ENCODE measurements at regions of chr17 and their contacts with region 1.

Region 1: GRCh38 chr17:1783834-1784611 is 22.2 kb downstream of the SERPINF1 start:
- DNase-seq: no peak
- ATAC-seq: peak; percentile 90
- H3K4me3 Mint-ChIP-seq: peak overlapping the region; percentile 44
- H3K27ac Mint-ChIP-seq: peak overlapping the region; percentile 84
- H3K4me1 Mint-ChIP-seq: peaks cover 33% of the 10 kb centered on the region
- H3K27me3 Mint-ChIP-seq: no peaks in the 10 kb centered on the region
- CTCF ChIP-seq: no peak

Region 2: DNA sequence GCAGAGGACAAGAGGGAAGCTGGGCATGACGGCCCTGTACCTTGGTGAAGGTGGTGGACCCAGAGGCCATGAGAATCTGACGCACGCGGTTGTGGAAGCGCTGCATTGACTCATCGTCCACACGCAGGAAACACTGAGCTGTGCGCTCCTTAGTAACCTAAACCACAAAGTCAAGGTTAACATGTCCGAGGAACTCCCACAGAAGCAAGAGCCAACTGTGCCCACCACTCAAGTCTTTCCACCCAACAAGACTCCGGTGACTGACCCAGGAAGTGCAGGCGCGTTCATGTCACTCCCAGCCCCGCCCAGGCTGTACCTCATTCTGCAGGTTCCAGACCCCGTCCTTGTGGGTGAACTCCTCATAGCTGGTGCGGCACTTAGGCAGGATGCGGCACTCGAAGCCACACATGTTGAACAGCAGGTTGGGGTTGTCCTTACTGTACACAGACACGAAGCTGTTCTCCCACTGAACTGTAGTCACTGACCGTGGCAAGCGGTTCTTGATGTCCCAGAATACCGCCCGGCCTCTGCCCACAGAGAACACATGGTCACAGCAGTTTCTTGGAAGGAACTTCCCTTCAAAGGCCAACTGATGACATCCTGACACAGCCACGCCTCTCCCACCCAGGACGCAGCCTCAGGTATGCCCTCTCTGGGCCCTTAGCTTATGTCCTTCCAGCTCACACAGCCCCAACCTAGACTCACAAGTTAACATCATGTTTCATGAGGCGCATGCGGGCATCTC is 110.8 kb before region 1 on chr17:
- CTCF ChIA-PET with region 1: interaction called, 36 read pairs
- POLR2A ChIA-PET with region 1: interaction called, 5 read pairs
- intact Hi-C with region 1: loop called (anchors 1 kb)
- DNase-seq: no peak
- ATAC-seq: no peak
- H3K4me3 Mint-ChIP-seq: no peak overlapping the region
- H3K27ac Mint-ChIP-seq: no peak overlapping the region
- H3K4me1 Mint-ChIP-seq: no peaks in the 10 kb centered on the region
- H3K27me3 Mint-ChIP-seq: no peaks in the 10 kb centered on the region
- CTCF ChIP-seq: no peak

Region 3: DNA sequence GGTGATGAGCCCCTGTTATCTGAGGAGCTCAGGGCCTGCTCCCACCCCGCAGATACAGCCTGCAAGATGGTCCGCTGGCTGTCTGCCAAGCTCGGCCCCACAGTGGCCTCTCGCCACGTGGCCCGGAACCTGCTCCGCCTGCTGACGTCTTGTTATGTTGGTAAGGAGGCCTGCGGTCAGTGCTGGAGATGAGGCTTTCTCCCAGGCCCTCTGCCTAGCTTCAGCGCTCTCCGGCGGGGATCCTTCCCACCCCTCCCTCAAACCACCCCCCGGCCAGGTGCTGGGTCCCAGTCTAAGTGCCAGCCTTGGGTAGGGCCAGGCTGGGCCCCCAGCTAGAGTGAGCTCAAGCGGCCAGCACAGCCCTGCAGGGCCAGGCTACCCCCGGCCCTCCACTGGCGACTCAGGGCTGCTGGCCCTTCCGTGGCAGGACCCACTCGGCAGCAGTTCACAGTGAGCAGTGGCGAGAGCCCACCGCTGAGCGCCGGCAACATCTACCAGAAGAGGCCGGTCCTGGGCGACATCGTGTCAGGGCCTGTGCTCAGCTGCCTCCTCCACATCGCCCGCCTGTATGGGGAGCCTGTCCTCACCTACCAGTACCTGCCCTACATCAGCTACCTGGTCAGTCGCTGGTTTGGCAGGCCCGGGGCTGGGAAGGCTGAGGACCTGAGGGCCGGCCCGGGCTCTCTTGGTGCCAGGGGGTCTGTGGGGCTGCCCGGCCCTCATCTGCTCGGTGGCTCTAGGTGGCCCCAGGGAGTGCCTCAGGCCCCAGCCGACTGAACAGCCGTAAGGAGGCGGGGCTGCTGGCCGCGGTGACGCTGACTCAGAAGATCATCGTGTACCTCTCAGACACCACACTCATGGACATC is 53.5 kb before region 1 on chr17:
- CTCF ChIA-PET with region 1: interaction called, 24 read pairs
- POLR2A ChIA-PET with region 1: interaction called, 113 read pairs
- intact Hi-C with region 1: no loop called
- DNase-seq: no peak
- ATAC-seq: no peak
- H3K4me3 Mint-ChIP-seq: no peak overlapping the region
- H3K27ac Mint-ChIP-seq: peak overlapping the region; percentile 24
- H3K4me1 Mint-ChIP-seq: peaks cover 56% of the 10 kb centered on the region
- H3K27me3 Mint-ChIP-seq: no peaks in the 10 kb centered on the region
- CTCF ChIP-seq: no peak

Region 4: GRCh38 chr17:1764284-1764683 is 19.7 kb before region 1 on chr17:
- CTCF ChIA-PET with region 1: interaction called, 19 read pairs
- POLR2A ChIA-PET with region 1: interaction called, 67 read pairs
- intact Hi-C with region 1: loop called (anchors 1 kb)
- DNase-seq: peak; percentile 41
- ATAC-seq: peak; percentile 85
- H3K4me3 Mint-ChIP-seq: peak overlapping the region; percentile 53
- H3K27ac Mint-ChIP-seq: peak overlapping the region; percentile 72
- H3K4me1 Mint-ChIP-seq: peaks cover 46% of the 10 kb centered on the region
- H3K27me3 Mint-ChIP-seq: no peaks in the 10 kb centered on the region
- CTCF ChIP-seq: no peak

Region 5: DNA sequence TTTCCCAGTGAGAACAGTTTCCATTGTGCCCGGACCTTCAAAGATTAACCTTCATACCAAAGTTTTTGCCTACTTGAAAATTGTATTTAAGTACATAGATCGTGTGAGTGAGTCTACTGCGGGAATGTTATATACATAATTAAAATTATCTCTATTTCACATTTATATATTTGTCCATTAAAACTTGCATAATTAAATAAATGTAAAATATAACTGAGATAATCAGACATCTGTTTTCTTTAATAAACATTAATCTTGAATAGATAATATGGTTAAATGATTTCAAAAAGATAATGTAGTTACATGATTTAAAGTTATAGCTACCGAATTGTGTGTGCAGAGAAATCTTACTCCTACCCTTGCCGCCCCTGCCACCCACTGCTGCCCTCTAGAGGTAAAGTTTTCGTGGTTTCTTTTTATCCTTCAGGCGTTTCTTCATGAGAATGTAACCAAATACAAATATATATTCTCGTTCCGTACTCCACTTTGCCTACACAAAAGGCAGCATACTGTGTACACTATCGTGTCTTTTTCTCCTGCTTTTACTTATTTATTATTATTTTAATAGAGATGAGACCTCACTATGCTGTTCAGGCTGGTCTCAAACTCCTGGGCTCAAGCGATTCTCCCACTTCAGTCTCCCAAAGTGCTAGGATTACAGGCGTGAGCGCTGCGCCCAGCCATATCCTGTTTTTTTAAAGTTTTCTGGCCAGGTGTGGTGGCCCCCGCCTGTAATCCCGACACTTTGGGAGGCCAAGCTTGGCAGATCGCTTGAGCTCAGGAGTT is 81.4 kb after region 1 on chr17:
- CTCF ChIA-PET with region 1: interaction called, 11 read pairs
- POLR2A ChIA-PET with region 1: no interaction called
- intact Hi-C with region 1: no loop called
- DNase-seq: no peak
- ATAC-seq: peak; percentile 42
- H3K4me3 Mint-ChIP-seq: no peak overlapping the region
- H3K27ac Mint-ChIP-seq: no peak overlapping the region
- H3K4me1 Mint-ChIP-seq: no peaks in the 10 kb centered on the region
- H3K27me3 Mint-ChIP-seq: no peaks in the 10 kb centered on the region
- CTCF ChIP-seq: peak; percentile 63